ENCODE measurements at regions of chr6 and their contacts with region 1.

Region 1: DNA sequence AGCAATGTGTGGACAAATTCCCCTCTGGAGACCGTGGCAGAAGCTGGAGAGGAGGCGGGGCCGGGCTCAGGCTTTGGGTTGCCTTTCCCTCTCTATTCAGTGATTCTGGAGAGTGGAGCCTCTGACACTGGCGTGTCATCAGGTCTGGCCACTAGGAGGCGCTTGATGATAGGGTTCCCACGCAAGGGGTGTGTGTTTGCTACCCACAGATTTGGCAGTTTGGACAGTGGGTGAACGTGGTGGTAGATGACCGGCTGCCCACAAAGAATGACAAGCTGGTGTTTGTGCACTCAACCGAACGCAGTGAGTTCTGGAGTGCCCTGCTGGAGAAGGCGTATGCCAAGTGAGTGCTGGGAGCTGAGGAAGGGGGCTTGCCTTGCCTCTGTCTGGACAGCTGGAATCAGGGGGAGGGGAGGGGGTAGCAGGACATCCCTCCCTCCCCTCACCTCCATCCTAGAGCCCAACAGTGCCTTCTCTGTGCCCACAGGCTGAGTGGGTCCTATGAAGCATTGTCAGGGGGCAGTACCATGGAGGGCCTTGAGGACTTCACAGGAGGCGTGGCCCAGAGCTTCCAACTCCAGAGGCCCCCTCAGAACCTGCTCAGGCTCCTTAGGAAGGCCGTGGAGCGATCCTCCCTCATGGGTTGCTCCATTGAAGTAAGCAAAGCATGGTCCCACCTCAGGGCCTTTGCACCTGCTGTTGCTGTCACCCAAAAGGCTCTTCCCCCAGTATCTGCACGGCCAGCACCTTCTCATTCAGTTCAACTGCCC is 14.3 kb downstream of the CAPN11 start:
- DNase-seq: peak; percentile 89
- H3K4me3 Mint-ChIP-seq: no peak overlapping the region
- H3K27ac Mint-ChIP-seq: no peak overlapping the region
- H3K4me1 Mint-ChIP-seq: peaks cover 4% of the 10 kb centered on the region
- H3K27me3 Mint-ChIP-seq: peaks cover 6% of the 10 kb centered on the region

Region 2: DNA sequence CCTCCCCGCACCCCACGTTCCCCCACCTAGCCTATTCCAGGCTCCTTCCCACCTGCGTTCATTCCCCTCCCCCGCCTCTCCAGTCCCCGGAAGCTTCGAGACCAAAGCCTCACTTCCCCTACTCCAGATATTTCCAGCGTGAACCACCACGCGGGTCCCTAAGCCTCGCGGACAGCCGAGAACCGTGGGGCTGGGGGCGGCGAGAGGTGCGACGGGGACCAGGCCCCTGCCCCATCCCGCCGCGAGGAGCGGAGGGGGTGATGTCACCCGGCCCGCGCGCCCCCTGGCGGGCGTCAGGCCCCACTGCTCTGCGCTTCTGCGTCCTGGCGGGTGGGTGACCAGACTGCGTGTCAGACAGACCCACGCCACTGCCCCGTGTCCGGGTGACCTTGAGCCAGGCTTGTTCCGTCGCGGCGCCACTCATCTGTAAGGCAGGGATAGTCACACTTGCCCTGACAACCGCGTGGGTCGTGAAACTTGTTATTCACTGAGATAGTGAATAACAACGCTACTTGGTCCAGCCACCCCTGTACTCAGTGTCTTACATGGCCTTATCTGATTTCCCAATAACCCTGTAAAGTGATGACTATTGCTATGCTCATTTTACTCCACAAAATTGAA is 65.0 kb after region 1 on chr6:
- CTCF ChIA-PET with region 1: interaction called, 14 read pairs
- intact Hi-C with region 1: loop called (anchors 1 kb)
- DNase-seq: peak; percentile 77
- H3K4me3 Mint-ChIP-seq: peak overlapping the region; percentile 78
- H3K27ac Mint-ChIP-seq: peak overlapping the region; percentile 87
- H3K4me1 Mint-ChIP-seq: peaks cover 14% of the 10 kb centered on the region
- H3K27me3 Mint-ChIP-seq: no peaks in the 10 kb centered on the region

Region 3: DNA sequence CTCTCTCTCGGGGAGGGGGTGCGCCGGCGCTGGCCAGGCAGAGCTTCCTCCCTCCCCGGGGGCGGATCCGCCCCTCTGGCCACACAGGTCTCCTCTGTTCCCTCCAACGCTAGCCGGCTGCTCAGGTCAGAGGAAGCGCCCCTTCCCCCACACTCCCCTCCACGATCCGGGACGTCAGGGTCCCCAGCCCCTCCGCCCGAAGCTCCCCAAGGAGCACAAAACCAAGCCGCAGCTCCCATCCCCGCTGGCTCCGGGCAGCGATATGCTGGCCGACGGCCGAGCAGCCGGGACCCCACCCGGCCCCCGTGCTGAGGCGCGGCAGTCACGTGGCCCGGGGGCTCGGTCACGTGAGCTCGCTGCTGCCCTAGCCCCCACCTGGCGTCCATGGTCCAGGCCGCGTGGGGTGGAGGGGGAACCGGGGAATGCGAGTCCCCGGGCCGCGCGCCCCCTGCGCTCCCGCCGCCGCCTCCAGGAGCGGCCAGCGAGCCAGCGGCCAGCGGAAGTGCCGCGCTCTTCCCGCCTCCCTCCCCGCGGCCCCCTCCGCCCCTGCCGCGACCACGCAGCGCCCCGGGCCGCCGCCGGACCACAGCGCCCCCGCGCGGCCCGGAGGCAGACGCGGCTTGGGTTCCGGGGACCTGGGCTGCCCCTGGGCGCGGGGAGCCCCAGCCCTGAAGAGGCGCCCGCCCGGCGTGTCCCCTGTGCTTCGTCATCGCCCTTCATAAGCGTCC is 84.3 kb after region 1 on chr6 and contains the start of gene SLC35B2:
- CTCF ChIA-PET with region 1: interaction called, 8 read pairs
- intact Hi-C with region 1: loop called (anchors 1 kb)
- DNase-seq: peak; percentile 61
- H3K4me3 Mint-ChIP-seq: peak within 1 kb of the TSS; percentile 77
- H3K27ac Mint-ChIP-seq: peak within 1 kb of the TSS; percentile 86
- H3K4me1 Mint-ChIP-seq: peaks cover 54% of the 10 kb centered on the region
- H3K27me3 Mint-ChIP-seq: no peaks in the 10 kb centered on the region
- total RNA-seq, gene SLC35B2: 7.2 to 7.3 TPM

Measured in activated naive CD4-positive, alpha-beta T cell treated with anti-CD3 and anti-CD28 coated beads for 36 hours (primary cell).